Panc1 (cell line): ENCODE measurements at regions of chr18 and their contacts with region 1.

Region 1: GRCh38 chr18:36314754-36315153 is 17.2 kb downstream of the FHOD3 start:
- DNase-seq: no peak
- ATAC-seq: peak; percentile 77
- H3K4me3 ChIP-seq: no peak overlapping the region
- H3K27ac ChIP-seq: peak overlapping the region; percentile 69
- H3K4me1 ChIP-seq: peaks cover 52% of the 10 kb centered on the region
- H3K27me3 ChIP-seq: no peaks in the 10 kb centered on the region
- CTCF ChIP-seq: no peak

Region 2: DNA sequence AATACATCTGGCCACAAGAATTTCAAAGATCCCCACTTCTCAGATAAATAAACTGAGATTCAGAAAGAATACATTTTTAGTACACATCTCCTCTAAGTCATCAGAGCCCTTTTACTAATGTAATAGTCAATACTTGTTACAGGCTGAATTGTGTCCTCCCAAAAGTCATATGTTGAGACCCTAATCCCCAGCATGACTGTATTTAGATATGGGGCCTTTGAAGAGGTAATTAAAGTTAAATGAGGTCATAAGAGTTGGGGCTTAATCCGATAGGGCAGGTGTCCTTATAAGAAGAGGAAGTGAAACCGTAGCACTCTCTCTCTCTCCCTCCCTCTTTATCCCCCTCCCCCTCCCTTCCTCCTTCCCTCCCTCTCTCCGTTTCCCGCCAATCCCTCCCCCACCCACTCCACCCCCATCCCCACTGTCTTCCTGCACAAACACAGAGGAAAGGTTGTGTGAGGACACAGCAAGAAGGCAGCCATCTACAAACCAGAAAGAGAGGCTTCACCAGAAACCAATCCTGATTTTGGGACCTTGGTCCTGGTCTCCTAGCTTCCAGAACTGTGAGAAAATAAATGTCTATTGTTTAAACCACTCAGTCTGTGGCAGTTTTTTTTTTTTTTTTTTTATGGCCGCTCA is 1140.5 kb before region 1 on chr18:
- CTCF ChIA-PET with region 1: no interaction called
- POLR2A ChIA-PET with region 1: no interaction called
- in situ Hi-C with region 1: no loop called
- intact Hi-C with region 1: no loop called
- DNase-seq: no peak
- ATAC-seq: no peak
- H3K4me3 ChIP-seq: no peak overlapping the region
- H3K27ac ChIP-seq: no peak overlapping the region
- H3K4me1 ChIP-seq: no peaks in the 10 kb centered on the region
- H3K27me3 ChIP-seq: no peaks in the 10 kb centered on the region
- CTCF ChIP-seq: no peak

Region 3: DNA sequence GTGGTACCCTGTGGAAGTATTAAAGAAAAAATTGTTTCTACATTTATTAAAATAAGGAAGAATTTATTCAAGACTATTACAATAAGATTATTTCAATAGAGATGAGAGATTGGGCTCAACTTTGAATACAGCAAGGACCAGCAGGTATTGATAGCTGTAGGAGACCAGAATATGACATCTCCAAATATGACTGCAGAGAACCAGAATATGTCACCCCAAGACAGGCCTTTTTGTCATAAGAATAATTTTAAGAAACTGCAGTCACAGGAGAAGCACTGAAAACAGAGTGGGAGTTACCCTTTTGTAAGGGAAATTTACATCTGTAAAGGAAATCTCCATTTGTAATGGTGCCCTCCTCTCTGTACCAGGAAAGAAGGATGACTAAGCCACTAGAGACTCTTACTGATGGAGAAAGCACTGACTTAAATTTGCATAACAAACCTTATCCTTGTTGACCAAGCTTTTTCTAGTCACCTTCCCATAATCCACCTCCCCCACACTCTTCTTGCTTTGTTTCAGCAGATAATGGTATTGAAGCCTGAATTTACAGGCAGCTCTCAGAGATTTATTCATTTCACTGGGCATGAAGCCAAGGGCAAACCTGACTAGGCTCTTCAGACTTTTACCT is 487.4 kb before region 1 on chr18:
- CTCF ChIA-PET with region 1: no interaction called
- POLR2A ChIA-PET with region 1: no interaction called
- in situ Hi-C with region 1: no loop called
- intact Hi-C with region 1: no loop called
- DNase-seq: no peak
- ATAC-seq: no peak
- H3K4me3 ChIP-seq: no peak overlapping the region
- H3K27ac ChIP-seq: no peak overlapping the region
- H3K4me1 ChIP-seq: no peaks in the 10 kb centered on the region
- H3K27me3 ChIP-seq: no peaks in the 10 kb centered on the region
- CTCF ChIP-seq: no peak

Region 4: GRCh38 chr18:36511791-36512352 is 197.1 kb after region 1 on chr18:
- CTCF ChIA-PET with region 1: interaction called, 12 read pairs
- POLR2A ChIA-PET with region 1: no interaction called
- in situ Hi-C with region 1: no loop called
- intact Hi-C with region 1: no loop called
- DNase-seq: no peak
- ATAC-seq: peak; percentile 75; the same call in 1 of the 2 replicates
- H3K4me3 ChIP-seq: no peak overlapping the region
- H3K27ac ChIP-seq: peak overlapping the region; percentile 64
- H3K4me1 ChIP-seq: peaks cover 13% of the 10 kb centered on the region
- H3K27me3 ChIP-seq: no peaks in the 10 kb centered on the region
- CTCF ChIP-seq: no peak

Region 5: DNA sequence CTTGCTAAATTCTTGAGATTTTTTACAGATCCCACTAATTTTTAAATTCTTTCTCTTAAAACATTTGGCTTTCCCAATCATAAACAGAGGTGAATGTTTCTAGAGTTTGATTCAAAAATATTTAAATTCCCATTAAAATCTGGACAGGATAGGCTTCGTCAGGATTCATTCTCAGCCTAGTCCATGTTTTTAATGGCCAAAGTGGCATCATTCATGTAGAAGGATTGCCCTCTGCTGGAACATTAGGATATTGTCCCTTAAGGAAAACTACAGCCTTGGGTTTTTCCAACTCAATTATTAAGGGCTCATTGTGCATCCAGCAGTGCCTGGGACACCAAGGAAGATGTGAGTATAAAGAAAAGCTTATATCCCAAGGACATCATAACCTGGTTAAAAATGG is 442.3 kb after region 1 on chr18:
- CTCF ChIA-PET with region 1: no interaction called
- POLR2A ChIA-PET with region 1: no interaction called
- in situ Hi-C with region 1: no loop called
- intact Hi-C with region 1: no loop called
- DNase-seq: peak; percentile 27
- ATAC-seq: peak; percentile 87
- H3K4me3 ChIP-seq: no peak overlapping the region
- H3K27ac ChIP-seq: no peak overlapping the region
- H3K4me1 ChIP-seq: no peaks in the 10 kb centered on the region
- H3K27me3 ChIP-seq: no peaks in the 10 kb centered on the region
- CTCF ChIP-seq: peak; percentile 63; the same call in 1 of the 2 replicates